CD4-positive, alpha-beta memory T cell (primary cell): ENCODE measurements at regions of chr9 and their contacts with region 1.

Region 1: DNA sequence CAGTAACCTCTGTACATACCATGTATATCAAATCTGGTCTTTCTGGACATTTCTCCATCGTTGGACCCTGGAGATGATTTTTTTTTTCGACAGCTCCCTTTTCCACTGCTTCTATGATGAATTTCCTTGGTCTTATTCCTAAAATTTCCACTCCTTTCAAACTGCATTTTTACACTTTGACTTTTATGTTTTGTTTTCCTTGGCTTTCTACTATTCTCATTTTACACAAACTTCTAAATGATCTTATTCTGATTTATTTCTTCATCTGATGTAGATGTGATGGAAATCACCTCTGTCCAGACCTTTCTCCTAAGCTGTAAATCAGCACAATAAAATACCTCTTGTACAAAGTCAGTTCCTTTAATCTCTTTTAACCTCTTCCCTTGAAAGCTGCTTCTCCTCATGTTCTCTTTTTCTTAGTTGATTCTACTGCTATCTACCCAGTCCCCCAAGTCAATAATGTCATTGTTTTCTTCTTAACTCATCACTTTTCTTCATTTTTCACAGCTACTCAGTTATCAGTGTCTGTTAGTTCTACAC is 48.7 kb upstream of the TUSC1 start:
- DNase-seq: no peak
- H3K4me3 ChIP-seq: no peak overlapping the region
- H3K4me3 Mint-ChIP-seq: no peak overlapping the region
- H3K27ac ChIP-seq: no peak overlapping the region
- H3K27ac Mint-ChIP-seq: no peak overlapping the region
- H3K4me1 ChIP-seq: no peaks in the 10 kb centered on the region
- H3K4me1 Mint-ChIP-seq: no peaks in the 10 kb centered on the region
- H3K27me3 ChIP-seq: no peaks in the 10 kb centered on the region
- H3K27me3 Mint-ChIP-seq: no peaks in the 10 kb centered on the region

Region 2: GRCh38 chr9:25505644-25506043 is 221.3 kb before region 1 on chr9:
- CTCF ChIA-PET with region 1: no interaction called
- POLR2A ChIA-PET with region 1: no interaction called
- intact Hi-C with region 1: no loop called
- DNase-seq: no peak
- H3K4me3 ChIP-seq: no peak overlapping the region
- H3K4me3 Mint-ChIP-seq: no peak overlapping the region
- H3K27ac ChIP-seq: no peak overlapping the region
- H3K27ac Mint-ChIP-seq: no peak overlapping the region
- H3K4me1 ChIP-seq: no peaks in the 10 kb centered on the region
- H3K4me1 Mint-ChIP-seq: no peaks in the 10 kb centered on the region
- H3K27me3 ChIP-seq: no peaks in the 10 kb centered on the region
- H3K27me3 Mint-ChIP-seq: no peaks in the 10 kb centered on the region

Region 3: DNA sequence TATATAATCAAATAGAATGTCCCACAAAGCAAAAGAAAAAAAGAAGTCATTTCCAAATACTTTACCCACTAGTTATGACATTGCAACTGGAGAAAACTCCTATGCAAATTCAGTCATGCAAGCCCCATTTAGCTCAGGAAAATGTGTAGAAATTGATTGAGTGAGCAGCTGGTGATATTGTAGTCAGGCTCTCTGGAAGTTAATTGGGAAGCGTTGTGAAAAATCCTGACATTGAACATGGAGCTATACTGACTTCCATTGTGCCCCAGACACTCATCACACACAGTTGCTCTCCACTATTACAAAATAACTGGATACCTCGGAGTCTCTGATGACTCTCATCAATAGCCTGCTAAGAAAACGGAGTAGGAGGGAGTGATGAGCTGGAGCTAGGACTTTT is 97.7 kb before region 1 on chr9:
- CTCF ChIA-PET with region 1: no interaction called
- POLR2A ChIA-PET with region 1: no interaction called
- intact Hi-C with region 1: no loop called
- DNase-seq: no peak
- H3K4me3 ChIP-seq: no peak overlapping the region
- H3K4me3 Mint-ChIP-seq: no peak overlapping the region
- H3K27ac ChIP-seq: no peak overlapping the region
- H3K27ac Mint-ChIP-seq: no peak overlapping the region
- H3K4me1 ChIP-seq: no peaks in the 10 kb centered on the region
- H3K4me1 Mint-ChIP-seq: no peaks in the 10 kb centered on the region
- H3K27me3 ChIP-seq: no peaks in the 10 kb centered on the region
- H3K27me3 Mint-ChIP-seq: no peaks in the 10 kb centered on the region

Region 4: GRCh38 chr9:25678162-25678666 is 48.7 kb before region 1 on chr9 and contains the start of gene TUSC1:
- CTCF ChIA-PET with region 1: no interaction called
- POLR2A ChIA-PET with region 1: no interaction called
- intact Hi-C with region 1: loop called (anchors 5 kb)
- DNase-seq: no peak
- H3K4me3 ChIP-seq: no peak within 1 kb of the TSS
- H3K4me3 Mint-ChIP-seq: peak within 1 kb of the TSS in 3 of 8 donors; percentile 26 to 30 (median 27)
- H3K27ac ChIP-seq: no peak within 1 kb of the TSS
- H3K27ac Mint-ChIP-seq: no peak within 1 kb of the TSS
- H3K4me1 ChIP-seq: no peaks in the 10 kb centered on the region
- H3K4me1 Mint-ChIP-seq: peaks cover 0 to 2% (median 0%) of the 10 kb centered on the region in 4 donors
- H3K27me3 ChIP-seq: no peaks in the 10 kb centered on the region
- H3K27me3 Mint-ChIP-seq: peaks cover 2 to 6% of the 10 kb centered on the region in 2 donors
- total RNA-seq, gene TUSC1: not detected